ENCODE measurements at regions of chr22 and their contacts with region 1.

Region 1: DNA sequence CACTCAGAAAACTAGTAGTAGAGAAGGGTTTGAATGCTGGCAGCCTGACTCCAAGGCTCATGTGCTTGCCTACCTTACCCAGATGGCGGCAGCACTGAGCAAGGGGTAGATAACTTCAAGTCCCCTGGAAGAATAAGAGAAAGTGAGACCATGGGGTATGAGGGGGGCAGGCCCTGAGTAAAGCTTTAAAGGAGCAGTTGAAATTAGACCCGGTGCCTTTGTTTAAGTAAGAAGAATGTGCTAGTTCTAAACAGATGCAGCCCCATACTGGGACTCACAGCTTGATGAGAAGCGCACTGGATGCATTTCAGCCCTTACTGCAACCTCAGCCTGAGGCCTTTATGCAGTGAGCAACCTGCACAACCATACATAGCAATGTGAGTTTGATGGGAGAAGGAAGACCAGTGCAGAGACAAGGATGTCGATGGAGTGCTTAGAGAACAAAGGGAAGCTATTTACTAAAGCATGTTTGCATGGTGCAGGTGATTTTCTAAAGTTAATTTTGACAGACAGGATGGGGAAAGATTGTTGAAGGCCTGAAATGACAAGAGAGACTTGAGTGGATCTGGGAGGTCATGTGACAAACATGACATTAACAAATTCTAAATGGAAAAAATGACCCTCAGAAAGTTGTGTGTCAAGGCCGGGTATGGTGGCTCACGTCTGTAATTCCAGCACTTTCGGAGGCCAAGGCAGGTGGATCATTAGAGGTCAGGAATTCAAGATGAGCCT is 27.1 kb upstream of the TMA7B start:
- DNase-seq: peak; percentile 89
- ATAC-seq: peak; percentile 95
- H3K4me3 Mint-ChIP-seq: no peak overlapping the region
- H3K27ac Mint-ChIP-seq: peak overlapping the region; percentile 48
- H3K4me1 Mint-ChIP-seq: peaks cover 48% of the 10 kb centered on the region
- H3K27me3 Mint-ChIP-seq: no peaks in the 10 kb centered on the region; the same call in 1 of the 2 replicates
- CTCF ChIP-seq: peak; percentile 97

Region 2: GRCh38 chr22:39360674-39361413 is 572.2 kb before region 1 on chr22:
- CTCF ChIA-PET with region 1: no interaction called
- POLR2A ChIA-PET with region 1: no interaction called
- DNase-seq: peak; percentile 52
- ATAC-seq: peak; percentile 51
- H3K4me3 Mint-ChIP-seq: no peak overlapping the region
- H3K27ac Mint-ChIP-seq: no peak overlapping the region; the same call in 1 of the 2 replicates
- H3K4me1 Mint-ChIP-seq: peaks cover 48% of the 10 kb centered on the region
- H3K27me3 Mint-ChIP-seq: no peaks in the 10 kb centered on the region
- CTCF ChIP-seq: no peak

Region 3: DNA sequence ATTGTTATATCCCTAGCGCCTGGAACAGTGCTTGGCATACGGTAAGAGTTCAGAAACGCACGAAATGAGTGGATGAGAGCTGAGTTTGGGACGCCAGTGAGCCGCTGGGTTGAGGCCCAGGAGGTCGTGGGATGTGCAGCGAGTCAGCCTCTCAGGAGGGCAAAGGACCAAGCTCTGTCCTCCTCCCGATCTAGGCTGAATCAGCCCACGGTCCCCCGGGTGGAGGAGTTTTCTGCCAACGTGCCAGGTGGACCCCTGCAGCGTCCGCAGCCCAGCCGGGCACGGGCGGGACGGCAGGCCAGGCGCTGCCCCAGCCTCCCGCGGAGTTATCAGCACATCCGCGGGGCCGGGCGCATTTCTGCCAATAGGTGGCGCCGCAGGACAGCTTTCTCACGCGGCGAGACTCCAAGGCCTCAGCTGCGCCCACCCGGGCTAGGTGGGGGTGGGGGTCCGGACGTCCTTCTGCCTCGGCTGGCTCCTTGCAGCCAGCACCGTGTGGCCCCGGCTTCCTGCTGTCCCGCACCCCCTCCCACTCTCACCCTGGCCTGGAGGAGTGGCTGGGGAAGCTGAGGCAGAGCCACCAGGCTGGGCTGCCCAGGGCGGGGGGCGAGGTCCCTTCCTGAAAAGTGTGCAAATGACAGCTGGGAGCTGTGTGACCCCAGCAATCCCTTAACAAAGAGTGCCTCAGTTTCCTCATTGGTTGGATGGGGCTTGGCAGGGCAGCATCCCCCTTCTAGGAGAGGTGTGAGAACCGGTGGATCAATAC is 398.3 kb before region 1 on chr22:
- CTCF ChIA-PET with region 1: interaction called, 11 read pairs
- POLR2A ChIA-PET with region 1: no interaction called
- DNase-seq: peak; percentile 96
- ATAC-seq: peak; percentile 12
- H3K4me3 Mint-ChIP-seq: peak overlapping the region; percentile 56
- H3K27ac Mint-ChIP-seq: peak overlapping the region; percentile 75
- H3K4me1 Mint-ChIP-seq: peaks cover 55% of the 10 kb centered on the region
- H3K27me3 Mint-ChIP-seq: no peaks in the 10 kb centered on the region
- CTCF ChIP-seq: peak; percentile 94

Region 4: GRCh38 chr22:39814899-39815298 is 118.2 kb before region 1 on chr22:
- CTCF ChIA-PET with region 1: no interaction called
- POLR2A ChIA-PET with region 1: no interaction called
- DNase-seq: no peak
- ATAC-seq: no peak
- H3K4me3 Mint-ChIP-seq: no peak overlapping the region
- H3K27ac Mint-ChIP-seq: no peak overlapping the region
- H3K4me1 Mint-ChIP-seq: no peaks in the 10 kb centered on the region
- H3K27me3 Mint-ChIP-seq: no peaks in the 10 kb centered on the region; the same call in none of the 2 replicates
- CTCF ChIP-seq: no peak

Region 5: DNA sequence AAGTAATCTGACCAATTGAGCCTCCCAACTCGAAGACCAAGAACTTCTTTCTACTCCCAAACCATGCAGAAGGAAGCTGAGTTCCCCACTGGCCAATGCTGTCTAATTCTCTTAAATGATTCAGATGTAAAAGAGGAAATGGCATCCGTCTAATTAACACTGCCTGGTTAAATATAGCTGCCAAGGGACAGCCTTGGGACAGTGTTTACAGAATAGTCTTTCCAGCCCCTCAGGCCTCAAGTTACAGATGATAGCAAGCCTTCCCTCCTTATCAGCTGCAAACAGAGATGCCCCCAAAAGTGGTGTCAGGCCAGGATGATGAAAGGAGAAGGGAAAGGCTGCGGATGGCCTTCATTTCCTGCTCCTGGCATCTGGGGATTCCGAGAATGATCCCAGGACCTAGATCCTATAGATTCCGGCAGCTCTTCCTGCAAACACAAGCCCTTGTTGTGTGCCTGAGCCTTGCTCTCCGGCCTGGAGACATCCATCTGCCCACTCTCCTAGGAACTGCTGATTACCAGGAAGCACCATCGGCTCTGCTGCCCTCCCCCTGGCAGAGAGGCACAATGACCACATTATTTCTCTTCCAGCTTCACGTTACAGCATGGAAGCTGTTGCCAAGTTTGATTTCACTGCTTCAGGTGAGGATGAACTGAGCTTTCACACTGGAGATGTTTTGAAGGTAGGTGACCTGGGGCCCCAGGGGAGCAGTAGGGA is 13.6 kb after region 1 on chr22:
- CTCF ChIA-PET with region 1: interaction called, 68 read pairs
- POLR2A ChIA-PET with region 1: interaction called, 4 read pairs
- DNase-seq: no peak
- ATAC-seq: no peak
- H3K4me3 Mint-ChIP-seq: no peak overlapping the region
- H3K27ac Mint-ChIP-seq: no peak overlapping the region
- H3K4me1 Mint-ChIP-seq: peaks cover 54% of the 10 kb centered on the region
- H3K27me3 Mint-ChIP-seq: peaks cover 6% of the 10 kb centered on the region; the same call in 1 of the 2 replicates
- CTCF ChIP-seq: no peak

Region 6: GRCh38 chr22:39997939-39998338 is 64.9 kb after region 1 on chr22:
- CTCF ChIA-PET with region 1: interaction called, 29 read pairs
- POLR2A ChIA-PET with region 1: no interaction called
- DNase-seq: peak; percentile 62
- ATAC-seq: peak; percentile 31
- H3K4me3 Mint-ChIP-seq: peak overlapping the region; percentile 64
- H3K27ac Mint-ChIP-seq: peak overlapping the region; percentile 100
- H3K4me1 Mint-ChIP-seq: peaks cover 79% of the 10 kb centered on the region
- H3K27me3 Mint-ChIP-seq: peaks cover 8% of the 10 kb centered on the region
- CTCF ChIP-seq: no peak

Region 7: DNA sequence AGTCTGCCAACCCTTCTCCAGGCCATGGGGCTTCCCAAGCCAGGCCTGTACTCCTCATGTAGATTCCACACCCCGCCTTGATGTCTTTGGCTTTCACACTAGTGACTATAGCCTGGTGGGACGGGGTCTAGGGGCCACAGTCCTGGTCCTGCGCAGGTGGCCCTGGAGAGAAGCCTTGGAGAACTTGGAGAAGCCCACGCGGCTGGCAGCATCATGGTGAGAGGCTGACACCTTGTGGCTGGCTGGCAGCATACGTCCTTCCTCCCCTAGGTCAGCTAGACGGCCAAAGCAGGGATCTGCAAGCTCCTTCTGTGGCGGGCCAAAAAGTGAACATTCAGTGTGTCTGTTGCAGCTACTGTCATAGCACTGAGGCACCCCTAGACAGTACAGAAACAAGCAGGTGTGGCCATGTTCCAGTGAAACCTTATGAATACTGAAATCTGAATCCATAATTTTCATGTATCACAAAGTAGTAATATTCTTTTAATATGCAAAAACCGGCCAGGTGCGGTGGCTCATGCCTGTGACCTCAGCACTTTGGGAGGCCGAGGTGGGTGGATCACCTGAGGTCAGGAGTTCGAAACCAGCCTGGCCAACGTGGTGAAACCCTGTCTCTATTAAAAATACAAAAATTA is 103.6 kb after region 1 on chr22:
- CTCF ChIA-PET with region 1: interaction called, 36 read pairs
- POLR2A ChIA-PET with region 1: interaction called, 3 read pairs
- DNase-seq: peak; percentile 77
- ATAC-seq: peak; percentile 90
- H3K4me3 Mint-ChIP-seq: no peak overlapping the region
- H3K27ac Mint-ChIP-seq: no peak overlapping the region
- H3K4me1 Mint-ChIP-seq: no peaks in the 10 kb centered on the region
- H3K27me3 Mint-ChIP-seq: peaks cover 14% of the 10 kb centered on the region
- CTCF ChIP-seq: peak; percentile 57